ENCODE measurements at regions of chr15 and their contacts with region 1.

Region 1: DNA sequence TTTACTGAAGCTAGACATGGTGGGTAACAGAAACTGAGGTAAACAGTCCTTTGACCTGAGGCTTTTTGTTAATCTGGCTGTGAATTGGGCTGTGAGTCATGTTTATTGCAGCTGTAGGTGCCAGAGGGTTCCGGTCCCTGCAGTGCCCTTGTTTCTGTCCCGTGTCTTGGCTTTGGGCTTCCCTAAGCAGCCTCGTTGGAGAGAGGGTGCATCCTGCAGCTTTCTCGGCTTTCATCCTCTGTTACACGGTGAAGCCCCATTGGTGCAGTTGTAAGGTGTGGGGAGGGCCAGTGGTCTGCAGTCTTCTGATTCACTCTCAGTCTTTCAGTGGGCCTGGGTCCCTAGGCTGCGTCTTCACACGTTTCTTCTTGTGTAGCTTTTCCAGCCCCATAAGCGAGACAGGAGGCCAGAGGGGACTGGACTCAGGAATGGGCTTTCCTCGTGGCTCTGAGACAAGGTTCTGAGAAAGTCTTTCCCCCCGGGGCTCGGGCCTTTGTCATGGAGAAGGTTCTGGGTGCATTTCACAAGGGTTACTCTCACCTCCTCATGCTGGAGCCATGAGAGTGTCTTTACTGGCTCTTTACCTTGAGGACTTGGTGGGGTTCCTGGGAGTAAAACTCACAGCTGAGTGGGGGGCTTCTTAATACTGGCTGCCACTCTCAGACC is 33.1 kb downstream of the ASB7 start:
- DNase-seq: no peak
- CTCF ChIP-seq: no peak

Region 2: GRCh38 chr15:100753503-100753902 is 118.0 kb after region 1 on chr15:
- in situ Hi-C with region 1: no loop called
- DNase-seq: no peak
- CTCF ChIP-seq: no peak

Region 3: DNA sequence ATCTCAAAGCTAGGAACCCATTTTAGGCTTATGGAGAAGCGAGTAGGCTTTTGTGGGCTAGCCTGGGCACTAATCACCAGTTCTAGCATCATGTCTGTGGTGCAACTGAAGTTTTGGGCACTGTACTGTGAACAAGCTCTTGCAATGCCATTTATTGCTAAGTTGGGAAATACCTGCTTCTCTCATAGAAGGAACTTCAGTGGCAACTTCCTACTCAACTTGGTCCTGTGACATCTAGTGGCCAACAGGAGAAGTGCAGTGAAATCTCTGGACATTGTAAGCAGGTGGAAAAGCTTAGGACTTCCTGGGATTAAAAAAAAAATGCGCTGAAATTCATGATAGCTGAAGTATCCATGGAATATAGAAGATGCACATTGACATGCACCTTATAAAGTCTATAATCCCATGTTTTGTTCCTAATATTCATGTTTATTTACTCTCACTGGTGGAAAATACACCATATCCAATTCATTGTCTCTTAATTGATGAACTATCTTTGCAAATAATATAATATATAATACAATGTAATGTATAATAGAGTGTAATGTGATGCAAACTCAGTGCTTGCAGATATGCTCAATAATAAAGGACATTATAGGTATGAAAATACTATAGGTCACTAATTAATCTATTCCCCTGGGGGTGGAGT is 237.6 kb after region 1 on chr15:
- in situ Hi-C with region 1: loop called (anchors 10 kb)
- DNase-seq: peak; percentile 78
- CTCF ChIP-seq: peak; percentile 74

Region 4: GRCh38 chr15:101105059-101105891 is 469.7 kb after region 1 on chr15:
- in situ Hi-C with region 1: no loop called
- DNase-seq: no peak
- CTCF ChIP-seq: no peak